ENCODE measurements at regions of chr12 and their contacts with region 1.

Region 1: GRCh38 chr12:47270782-47271664 is 191.3 kb upstream of the AMIGO2 start:
- DNase-seq: peak; percentile 30
- H3K4me3 Mint-ChIP-seq: no peak overlapping the region
- H3K27ac Mint-ChIP-seq: peak overlapping the region; percentile 61
- H3K4me1 Mint-ChIP-seq: peaks cover 69% of the 10 kb centered on the region
- H3K27me3 Mint-ChIP-seq: no peaks in the 10 kb centered on the region

Region 2: GRCh38 chr12:47302111-47302671 is 31.2 kb after region 1 on chr12:
- CTCF ChIA-PET with region 1: interaction called, 3 read pairs
- POLR2A ChIA-PET with region 1: no interaction called
- intact Hi-C with region 1: loop called (anchors 1 kb)
- DNase-seq: peak; percentile 29
- H3K4me3 Mint-ChIP-seq: peak overlapping the region; percentile 56
- H3K27ac Mint-ChIP-seq: peak overlapping the region; percentile 91
- H3K4me1 Mint-ChIP-seq: peaks cover 75% of the 10 kb centered on the region
- H3K27me3 Mint-ChIP-seq: no peaks in the 10 kb centered on the region

Region 3: GRCh38 chr12:47551426-47551851 is 280.4 kb after region 1 on chr12:
- CTCF ChIA-PET with region 1: no interaction called
- POLR2A ChIA-PET with region 1: no interaction called
- intact Hi-C with region 1: no loop called
- DNase-seq: no peak
- H3K4me3 Mint-ChIP-seq: no peak overlapping the region
- H3K27ac Mint-ChIP-seq: no peak overlapping the region
- H3K4me1 Mint-ChIP-seq: no peaks in the 10 kb centered on the region
- H3K27me3 Mint-ChIP-seq: peaks cover 4% of the 10 kb centered on the region

Measured in activated CD4-positive, alpha-beta memory T cell treated with anti-CD3 and anti-CD28 coated beads for 36 hours (primary cell).